RWPE1 (cell line): ENCODE measurements at regions of chr10 and their contacts with region 1.

Region 1: GRCh38 chr10:132558816-132559413 is 21.3 kb downstream of the INPP5A start:
- DNase-seq: no peak
- H3K27ac ChIP-seq: no peak overlapping the region
- CTCF ChIP-seq: no peak

Region 2: GRCh38 chr10:132506711-132507408 is 52.1 kb before region 1 on chr10:
- CTCF ChIA-PET with region 1: no interaction called
- POLR2A ChIA-PET with region 1: no interaction called
- DNase-seq: no peak
- H3K27ac ChIP-seq: no peak overlapping the region
- CTCF ChIP-seq: no peak

Region 3: DNA sequence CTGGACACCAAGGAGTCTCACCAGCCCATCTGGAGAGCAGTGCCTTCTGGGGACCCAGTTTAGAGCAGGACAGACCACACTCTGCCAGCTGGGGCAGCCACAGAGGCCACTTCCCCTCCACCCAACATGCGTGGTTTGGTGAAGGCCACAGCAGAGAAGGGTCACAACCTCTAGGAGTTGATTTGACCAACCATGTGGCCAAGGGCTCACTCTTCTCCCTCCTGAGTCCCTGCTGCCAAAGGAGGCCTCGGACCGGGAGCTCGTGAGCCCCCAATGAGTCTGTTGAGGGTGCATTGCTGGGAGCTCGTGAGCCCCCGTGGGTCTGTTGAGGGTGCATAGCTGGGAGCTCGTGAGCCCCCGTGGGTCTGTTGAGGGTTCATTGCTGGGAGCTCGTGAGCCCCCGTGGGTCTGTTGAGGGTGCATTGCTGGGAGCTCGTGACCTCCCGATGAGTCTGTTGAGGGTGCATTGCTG is 37.2 kb before region 1 on chr10:
- CTCF ChIA-PET with region 1: interaction called, 10 read pairs
- POLR2A ChIA-PET with region 1: no interaction called
- DNase-seq: no peak
- H3K27ac ChIP-seq: no peak overlapping the region
- CTCF ChIP-seq: no peak